Activated CD4-positive, alpha-beta memory T cell treated with anti-CD3 and anti-CD28 coated beads for 36 hours (primary cell): ENCODE measurements at regions of chr1 and their contacts with region 1.

Region 1: GRCh38 chr1:65687428-65688214 is 105.1 kb upstream of the PDE4B start:
- DNase-seq: peak; percentile 85
- H3K4me3 Mint-ChIP-seq: no peak overlapping the region
- H3K27ac Mint-ChIP-seq: no peak overlapping the region
- H3K4me1 Mint-ChIP-seq: no peaks in the 10 kb centered on the region
- H3K27me3 Mint-ChIP-seq: peaks cover 10% of the 10 kb centered on the region

Region 2: DNA sequence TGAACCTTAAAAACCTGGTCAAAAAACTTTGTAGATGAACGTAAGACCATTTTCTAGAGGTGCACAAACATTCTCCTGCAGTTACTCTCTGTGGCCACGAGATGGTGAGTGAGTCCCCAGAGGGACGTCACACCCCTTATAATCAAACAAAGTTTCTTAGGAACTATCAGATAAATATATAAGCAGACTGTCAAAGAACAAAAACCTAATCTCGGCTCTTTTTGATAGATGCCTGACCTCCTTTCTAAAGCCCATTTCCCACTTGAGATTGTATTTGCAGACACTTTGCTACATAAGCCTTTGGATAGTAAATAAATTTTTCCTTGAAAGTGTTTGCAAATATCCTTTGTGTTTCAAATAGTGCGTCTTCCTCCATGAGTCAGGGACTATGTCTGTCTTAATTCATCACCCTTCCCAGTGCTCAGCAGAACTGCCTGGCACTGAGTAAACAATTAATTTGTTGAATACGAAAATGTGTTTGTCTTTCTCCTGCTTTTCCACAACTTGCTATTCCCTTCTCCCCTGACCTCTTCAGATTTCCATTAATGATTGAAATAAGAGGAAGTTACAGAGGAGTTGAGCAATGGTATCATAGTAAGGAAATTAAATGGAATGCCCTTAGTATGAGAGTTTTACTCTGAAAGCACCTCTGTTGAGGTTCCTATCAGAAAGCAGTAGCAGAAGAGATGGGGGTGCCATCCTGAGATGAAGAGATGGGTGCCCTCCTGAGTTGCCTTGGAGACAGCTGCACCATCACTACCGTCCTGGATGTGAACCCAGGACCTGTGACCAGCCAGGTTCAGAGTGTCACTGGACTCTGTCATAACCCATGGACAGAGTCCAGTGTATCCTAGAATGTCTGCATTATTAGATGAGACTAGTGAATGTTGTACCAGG is 1000.5 kb before region 1 on chr1:
- CTCF ChIA-PET with region 1: no interaction called
- POLR2A ChIA-PET with region 1: no interaction called
- intact Hi-C with region 1: loop called (anchors 2 kb)
- DNase-seq: peak; percentile 35
- H3K4me3 Mint-ChIP-seq: no peak overlapping the region
- H3K27ac Mint-ChIP-seq: no peak overlapping the region
- H3K4me1 Mint-ChIP-seq: peaks cover 6% of the 10 kb centered on the region
- H3K27me3 Mint-ChIP-seq: no peaks in the 10 kb centered on the region

Region 3: GRCh38 chr1:65059930-65060538 is 627.6 kb before region 1 on chr1:
- CTCF ChIA-PET with region 1: interaction called, 11 read pairs
- POLR2A ChIA-PET with region 1: no interaction called
- intact Hi-C with region 1: no loop called
- DNase-seq: no peak
- H3K4me3 Mint-ChIP-seq: no peak overlapping the region
- H3K27ac Mint-ChIP-seq: no peak overlapping the region
- H3K4me1 Mint-ChIP-seq: peaks cover 45% of the 10 kb centered on the region
- H3K27me3 Mint-ChIP-seq: no peaks in the 10 kb centered on the region

Region 4: DNA sequence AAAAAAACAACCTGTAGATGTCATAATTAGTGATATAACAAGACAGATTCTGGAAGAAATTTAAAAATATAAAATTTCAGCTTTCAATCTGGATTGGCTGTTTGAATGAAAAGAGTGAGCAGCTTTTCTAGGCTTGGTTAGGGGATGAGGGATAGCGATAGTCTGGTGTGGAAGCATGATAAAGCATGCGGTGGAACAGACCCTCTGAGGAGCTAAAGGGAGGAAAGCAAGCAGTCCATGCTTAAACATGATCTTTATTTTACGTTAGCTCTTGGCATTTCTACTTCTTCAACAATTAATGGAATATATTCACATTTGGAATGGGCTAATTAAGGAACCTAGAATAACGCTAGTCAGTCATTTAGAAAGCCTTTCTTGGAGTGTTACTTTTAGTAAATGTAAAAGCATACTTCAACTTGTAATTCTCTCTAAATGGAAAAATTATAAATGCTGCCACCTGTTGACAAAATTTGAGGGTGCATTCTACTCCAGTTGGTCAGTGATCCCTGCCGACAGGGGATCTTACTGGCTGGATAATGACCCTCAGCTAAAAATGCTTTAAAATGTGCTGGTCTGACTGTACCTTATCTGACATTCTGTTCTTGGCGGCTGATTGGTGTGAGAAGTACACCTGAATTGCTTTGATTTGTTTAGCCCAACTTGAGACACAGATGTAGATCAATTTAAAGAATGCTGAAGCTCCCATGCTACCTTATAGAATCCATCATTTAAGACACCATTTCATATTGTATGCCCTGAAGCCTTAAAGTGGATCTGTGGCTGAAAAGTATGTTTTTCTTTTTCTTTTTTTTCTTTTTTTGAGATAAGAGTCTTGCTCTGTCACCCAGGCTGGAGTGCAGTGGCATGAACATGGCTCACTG is 478.4 kb before region 1 on chr1:
- CTCF ChIA-PET with region 1: interaction called, 10 read pairs
- POLR2A ChIA-PET with region 1: no interaction called
- intact Hi-C with region 1: no loop called
- DNase-seq: no peak
- H3K4me3 Mint-ChIP-seq: no peak overlapping the region
- H3K27ac Mint-ChIP-seq: no peak overlapping the region
- H3K4me1 Mint-ChIP-seq: peaks cover 14% of the 10 kb centered on the region
- H3K27me3 Mint-ChIP-seq: peaks cover 3% of the 10 kb centered on the region

Region 5: DNA sequence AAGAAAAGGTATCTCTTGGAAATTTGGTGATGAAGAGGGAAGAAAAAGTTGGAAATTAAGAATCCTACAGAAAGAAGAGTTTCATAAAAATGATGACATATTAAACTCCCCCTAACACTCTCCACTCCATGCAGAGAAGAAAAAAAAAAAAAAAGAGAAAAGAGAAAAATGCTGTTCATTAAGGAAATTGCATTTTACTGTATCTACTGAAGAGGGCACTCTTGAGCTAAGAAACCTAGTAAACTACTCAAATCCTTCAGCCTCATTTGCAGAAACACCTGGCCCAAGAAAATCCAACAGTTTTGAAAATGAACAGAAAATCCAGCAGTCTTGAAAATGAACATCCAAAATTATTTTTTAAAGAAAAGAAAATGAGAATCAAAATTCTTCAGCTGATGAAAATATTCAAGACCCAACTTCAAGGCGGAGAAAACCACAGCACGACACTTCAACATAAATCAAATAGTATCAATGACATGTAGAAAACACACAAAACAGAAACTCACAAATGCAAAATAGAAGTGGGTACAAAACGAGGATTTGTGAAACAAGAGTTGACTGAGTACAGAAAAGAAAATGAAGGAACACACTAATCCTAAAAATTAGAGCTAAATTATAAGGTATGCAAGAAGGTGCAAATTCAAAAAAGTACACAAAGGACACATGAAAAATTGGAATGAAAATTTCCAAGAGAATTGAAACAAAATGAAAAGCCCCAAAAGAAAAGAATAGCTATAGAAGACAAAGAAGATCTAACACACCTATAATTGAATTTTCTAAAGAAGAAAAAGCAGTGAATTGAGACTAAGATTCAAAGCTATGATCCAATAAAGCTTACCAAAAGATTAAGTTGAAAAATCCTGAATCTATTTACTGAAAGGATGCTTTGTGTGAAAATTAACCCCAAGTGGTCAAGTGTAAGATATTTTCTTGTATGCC is 451.5 kb before region 1 on chr1:
- CTCF ChIA-PET with region 1: interaction called, 150 read pairs
- POLR2A ChIA-PET with region 1: no interaction called
- intact Hi-C with region 1: loop called (anchors 1 kb)
- DNase-seq: no peak
- H3K4me3 Mint-ChIP-seq: no peak overlapping the region
- H3K27ac Mint-ChIP-seq: no peak overlapping the region
- H3K4me1 Mint-ChIP-seq: peaks cover 9% of the 10 kb centered on the region
- H3K27me3 Mint-ChIP-seq: peaks cover 5% of the 10 kb centered on the region

Region 6: DNA sequence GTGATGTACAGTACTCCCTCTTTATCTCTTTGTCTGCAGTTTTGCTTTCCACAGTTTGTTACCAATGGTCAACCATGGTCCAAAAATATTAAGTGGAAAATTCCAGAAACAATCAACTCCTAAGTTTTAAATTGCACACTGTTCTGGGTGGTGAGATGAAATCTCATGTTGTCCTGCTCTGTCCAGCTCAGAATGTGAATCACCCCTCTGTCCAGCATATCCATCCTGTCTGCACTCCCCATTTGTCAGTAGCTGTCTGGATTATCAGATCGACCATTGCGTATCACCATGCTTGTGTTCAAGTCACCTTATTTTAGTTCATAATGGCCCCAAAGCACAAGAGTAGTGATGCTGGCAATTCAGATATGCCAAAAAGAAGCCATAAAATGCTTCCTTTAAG is 13.1 kb before region 1 on chr1:
- CTCF ChIA-PET with region 1: interaction called, 15 read pairs
- POLR2A ChIA-PET with region 1: no interaction called
- intact Hi-C with region 1: no loop called
- DNase-seq: no peak
- H3K4me3 Mint-ChIP-seq: no peak overlapping the region
- H3K27ac Mint-ChIP-seq: no peak overlapping the region
- H3K4me1 Mint-ChIP-seq: no peaks in the 10 kb centered on the region
- H3K27me3 Mint-ChIP-seq: no peaks in the 10 kb centered on the region

Region 7: GRCh38 chr1:65703853-65704252 is 16.2 kb after region 1 on chr1:
- CTCF ChIA-PET with region 1: interaction called, 15 read pairs
- POLR2A ChIA-PET with region 1: no interaction called
- intact Hi-C with region 1: no loop called
- DNase-seq: no peak
- H3K4me3 Mint-ChIP-seq: no peak overlapping the region
- H3K27ac Mint-ChIP-seq: no peak overlapping the region
- H3K4me1 Mint-ChIP-seq: no peaks in the 10 kb centered on the region
- H3K27me3 Mint-ChIP-seq: peaks cover 8% of the 10 kb centered on the region

Region 8: DNA sequence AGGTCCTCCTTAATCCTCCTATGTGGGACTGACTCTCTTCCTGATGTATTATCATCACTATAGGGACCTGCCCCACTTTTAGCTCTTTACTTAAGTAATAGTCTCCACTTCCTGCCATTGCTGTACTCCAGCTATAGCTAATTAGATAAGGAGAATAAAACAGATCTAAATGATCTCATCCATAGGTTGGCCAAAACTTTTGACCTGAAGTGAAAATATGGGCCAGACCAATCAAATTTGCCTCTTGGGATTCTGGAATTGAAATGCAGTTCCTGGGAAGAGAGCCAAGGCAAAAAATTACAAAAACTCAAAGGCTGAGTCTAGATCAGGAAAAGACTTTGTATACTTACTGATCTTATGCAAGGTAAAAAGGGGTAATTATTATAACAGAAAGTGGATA is 69.0 kb after region 1 on chr1:
- CTCF ChIA-PET with region 1: no interaction called
- POLR2A ChIA-PET with region 1: no interaction called
- intact Hi-C with region 1: no loop called
- DNase-seq: no peak
- H3K4me3 Mint-ChIP-seq: no peak overlapping the region
- H3K27ac Mint-ChIP-seq: no peak overlapping the region
- H3K4me1 Mint-ChIP-seq: no peaks in the 10 kb centered on the region
- H3K27me3 Mint-ChIP-seq: peaks cover 4% of the 10 kb centered on the region